Heart right ventricle (tissue), 16 donors: ENCODE measurements at regions of chr2 and their contacts with region 1.

Region 1: DNA sequence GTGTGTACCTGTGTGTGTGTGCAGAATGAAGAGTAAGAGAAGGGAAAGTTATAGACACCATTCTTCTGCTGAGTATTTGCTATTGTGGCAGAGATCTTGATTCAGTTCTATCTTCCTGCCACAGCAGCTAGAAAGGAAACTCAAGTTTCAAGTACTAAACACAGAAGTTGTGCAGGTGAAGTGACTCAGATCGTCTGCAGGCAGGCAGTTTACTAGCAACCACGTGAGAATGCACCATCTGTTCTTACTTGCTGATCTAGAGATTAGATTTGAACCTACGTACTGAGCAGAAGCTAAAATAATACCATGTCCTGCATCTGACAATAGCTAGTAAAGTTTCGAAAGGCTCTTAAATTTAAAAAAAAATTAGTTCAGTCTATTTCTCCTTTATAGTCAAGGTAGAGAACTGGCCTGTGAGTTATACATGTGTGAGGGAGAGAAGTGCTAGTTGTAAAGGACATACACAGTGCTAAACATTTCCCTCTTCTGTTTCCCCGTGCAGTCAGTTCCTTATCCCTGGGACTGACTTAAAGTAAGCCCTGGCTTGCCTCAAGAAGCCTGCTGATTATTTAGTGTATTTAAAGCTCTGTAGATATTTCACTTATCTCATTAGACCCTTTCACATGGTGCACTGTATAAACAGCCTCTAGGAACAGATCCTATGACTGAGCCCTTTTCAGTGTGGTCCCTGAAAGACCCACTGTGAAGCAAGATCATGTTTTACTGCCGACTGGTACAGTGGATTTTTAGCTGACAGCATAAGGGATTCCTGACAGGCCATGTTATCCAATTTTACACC is 45.0 kb downstream of the SLC38A11 start:
- DNase-seq: no peak
- ATAC-seq: peak in 6 of 8 donors; percentile 38 to 65 (median 46)
- H3K4me3 ChIP-seq: no peak overlapping the region
- H3K27ac ChIP-seq: peak overlapping the region in 5 of 10 donors; percentile 1 to 61 (median 28)
- H3K4me1 ChIP-seq: peaks cover 4 to 61% (median 30%) of the 10 kb centered on the region in 9 donors
- H3K27me3 ChIP-seq: no peaks in the 10 kb centered on the region
- CTCF ChIP-seq: no peak

Region 2: GRCh38 chr2:164569378-164569777 is 340.9 kb before region 1 on chr2:
- intact Hi-C with region 1: loop called in 1 of 10 experiments (anchors 5 kb)
- DNase-seq: no peak
- ATAC-seq: peak in 1 of 8 donors; percentile 44
- H3K4me3 ChIP-seq: no peak overlapping the region
- H3K27ac ChIP-seq: no peak overlapping the region
- H3K4me1 ChIP-seq: peaks cover 0 to 6% (median 0%) of the 10 kb centered on the region in 9 donors
- H3K27me3 ChIP-seq: no peaks in the 10 kb centered on the region
- CTCF ChIP-seq: no peak

Region 3: GRCh38 chr2:164882276-164882675 is 28.0 kb before region 1 on chr2:
- intact Hi-C with region 1: no loop called
- DNase-seq: no peak
- ATAC-seq: no peak
- H3K4me3 ChIP-seq: no peak overlapping the region
- H3K27ac ChIP-seq: no peak overlapping the region
- H3K4me1 ChIP-seq: no peaks in the 10 kb centered on the region
- H3K27me3 ChIP-seq: no peaks in the 10 kb centered on the region
- CTCF ChIP-seq: no peak